ENCODE measurements at regions of chr4 and their contacts with region 1.

Region 1: DNA sequence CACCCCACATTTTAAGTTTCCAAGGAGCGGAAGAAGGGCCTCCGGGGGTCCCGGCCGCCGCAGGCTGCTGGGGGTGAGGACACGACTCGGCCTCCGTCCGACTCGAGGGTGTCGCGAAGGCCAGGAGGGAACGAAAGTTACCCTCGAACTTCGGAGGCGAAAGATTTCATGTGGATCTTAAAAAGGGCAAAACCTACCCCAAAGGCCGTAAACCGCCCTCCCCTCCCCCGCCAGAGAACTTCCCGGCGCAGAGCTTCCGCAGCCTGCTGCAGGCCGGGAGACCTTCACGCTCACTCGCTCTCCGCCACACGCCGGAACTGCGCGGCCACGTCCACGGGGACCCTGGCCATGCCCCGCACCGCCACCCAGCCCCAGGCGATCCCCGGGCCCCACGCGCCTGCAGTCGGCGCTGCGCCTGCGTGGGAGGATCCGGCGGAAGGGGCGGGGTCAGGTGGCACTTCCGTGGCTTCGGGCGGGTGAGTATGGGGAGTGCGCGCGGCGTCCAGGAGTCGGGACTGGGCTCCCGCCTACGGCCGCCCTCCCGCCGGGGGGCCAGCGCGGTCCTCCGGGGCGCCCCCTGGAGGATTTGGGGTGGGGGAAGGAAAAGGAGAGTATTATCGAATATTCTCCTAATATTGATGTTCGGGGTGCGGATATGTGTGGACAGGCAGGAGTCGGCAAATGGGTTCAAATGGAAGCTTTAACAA is at the start of gene MMAA:
- DNase-seq: peak; percentile 66 to 94
- H3K4me3 ChIP-seq: peak within 1 kb of the TSS; percentile 94
- H3K27ac ChIP-seq: peak within 1 kb of the TSS; percentile 86
- H3K4me1 ChIP-seq: no peaks in the 10 kb centered on the region; the same call in 1 of the 2 replicates
- H3K27me3 ChIP-seq: no peaks in the 10 kb centered on the region
- CTCF ChIP-seq: peak; percentile 72
- total RNA-seq, gene MMAA: 5.4 and 6.3 TPM in 2 replicates

Region 2: DNA sequence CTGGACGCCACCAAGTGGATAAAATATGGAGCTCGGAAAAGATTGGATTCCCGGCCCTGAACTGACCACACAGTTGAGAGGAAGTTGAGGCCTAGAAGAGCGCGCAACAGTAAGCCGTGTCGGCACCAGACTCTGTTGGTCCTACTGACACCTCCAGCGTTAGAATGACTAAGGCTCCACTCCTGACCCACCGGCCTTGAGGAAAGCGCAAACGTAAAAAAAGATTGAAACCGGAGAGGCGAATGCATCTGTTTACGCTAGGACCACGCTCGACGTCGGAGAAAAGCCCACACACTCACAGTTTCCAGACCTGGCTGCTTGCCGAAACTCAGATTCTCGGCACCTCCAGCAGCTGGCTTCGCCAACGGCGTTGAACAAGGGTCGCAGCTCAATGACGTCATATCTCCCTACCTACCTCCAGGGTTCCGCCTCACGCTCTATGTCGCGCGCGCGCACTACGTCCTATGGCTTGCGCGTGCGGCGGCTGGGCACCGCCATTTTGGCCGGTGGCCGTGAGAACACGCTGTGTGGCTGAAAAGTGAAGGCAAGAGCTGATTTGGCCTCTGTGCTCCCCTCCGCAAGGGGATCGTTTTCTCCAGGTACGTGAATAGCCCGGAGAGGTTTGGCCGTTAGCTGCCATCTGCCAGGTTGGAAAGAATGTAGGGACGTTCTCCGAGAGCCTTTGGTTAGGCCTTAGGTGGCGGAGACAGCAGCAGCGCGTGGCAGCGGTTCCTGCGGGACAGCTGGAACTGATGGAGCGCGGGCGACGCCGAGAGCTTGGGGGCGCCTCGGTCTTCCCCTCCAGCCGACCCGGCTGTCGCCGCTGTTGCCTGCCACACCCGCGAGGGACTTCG is 521.0 kb before region 1 on chr4 and contains the starts of genes ABCE1 and ANAPC10:
- CTCF ChIA-PET with region 1: no interaction called
- POLR2A ChIA-PET with region 1: interaction called, 3 read pairs
- intact Hi-C with region 1: loop called (anchors 5 kb)
- DNase-seq: peak; percentile 86 to 90
- H3K4me3 ChIP-seq: peak within 1 kb of the TSS; percentile 78
- H3K27ac ChIP-seq: peak within 1 kb of the TSS; percentile 82
- H3K4me1 ChIP-seq: peaks cover 20% of the 10 kb centered on the region
- H3K27me3 ChIP-seq: no peaks in the 10 kb centered on the region
- CTCF ChIP-seq: no peak
- total RNA-seq, gene ABCE1: 55.1 and 60.6 TPM in 2 replicates
- total RNA-seq, gene ANAPC10: 16.5 and 20.2 TPM in 2 replicates

Region 3: DNA sequence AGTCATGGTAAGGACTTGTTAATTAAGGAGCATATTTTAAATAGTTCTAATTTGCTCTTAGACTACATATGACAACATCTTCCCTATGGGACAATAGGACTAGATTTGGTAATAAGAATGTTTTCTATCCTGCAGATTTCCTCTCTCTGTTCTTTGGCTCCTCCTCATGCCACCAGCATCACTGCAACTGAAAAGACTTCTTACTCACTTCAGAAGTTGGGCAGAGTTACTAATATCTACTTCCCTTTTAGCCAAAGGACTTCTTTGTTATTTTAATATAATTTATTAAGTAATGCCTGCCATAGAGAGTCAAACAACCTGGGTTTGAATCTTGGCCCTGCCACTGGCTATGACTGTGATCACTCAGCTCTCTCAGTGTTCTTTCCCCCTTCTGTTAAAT is 16.5 kb after region 1 on chr4:
- CTCF ChIA-PET with region 1: interaction called, 10 read pairs
- POLR2A ChIA-PET with region 1: no interaction called
- intact Hi-C with region 1: no loop called
- DNase-seq: no peak
- H3K4me3 ChIP-seq: no peak overlapping the region
- H3K27ac ChIP-seq: no peak overlapping the region
- H3K4me1 ChIP-seq: no peaks in the 10 kb centered on the region
- H3K27me3 ChIP-seq: no peaks in the 10 kb centered on the region
- CTCF ChIP-seq: no peak

Region 4: GRCh38 chr4:145722561-145722960 is 103.5 kb after region 1 on chr4:
- CTCF ChIA-PET with region 1: no interaction called
- POLR2A ChIA-PET with region 1: no interaction called
- intact Hi-C with region 1: no loop called
- DNase-seq: no peak
- H3K4me3 ChIP-seq: no peak overlapping the region
- H3K27ac ChIP-seq: no peak overlapping the region
- H3K4me1 ChIP-seq: peaks cover 12% of the 10 kb centered on the region
- H3K27me3 ChIP-seq: no peaks in the 10 kb centered on the region
- CTCF ChIP-seq: no peak

Region 5: DNA sequence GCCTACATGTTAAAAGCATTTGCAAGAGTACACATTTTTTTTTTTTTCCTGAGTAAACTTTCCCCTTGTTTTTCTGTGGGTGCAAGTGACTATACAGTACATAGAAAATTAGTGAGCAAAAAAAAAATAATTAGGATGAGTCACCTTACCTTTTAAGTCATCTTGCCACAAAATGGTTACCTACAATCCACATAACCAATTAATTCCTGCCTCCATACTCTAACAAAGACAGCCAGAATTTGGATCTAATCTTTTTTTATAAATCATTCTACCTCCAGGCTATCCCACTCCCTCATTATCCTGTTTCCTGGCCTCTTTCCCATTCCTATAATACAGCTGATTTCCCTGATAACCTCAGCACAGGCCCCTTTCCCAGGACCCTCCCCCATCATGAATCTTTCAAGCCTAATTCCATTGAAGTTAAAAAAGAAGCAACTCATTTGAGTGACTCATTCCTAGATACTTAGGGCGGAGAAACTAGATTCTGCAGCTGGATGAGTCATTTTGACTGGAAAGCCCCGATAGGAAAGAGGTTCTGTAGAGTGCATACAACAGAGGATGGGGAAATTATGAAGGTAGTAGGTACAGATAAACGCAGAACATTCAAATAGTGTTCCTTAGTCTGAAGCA is 189.1 kb after region 1 on chr4:
- CTCF ChIA-PET with region 1: no interaction called
- POLR2A ChIA-PET with region 1: no interaction called
- intact Hi-C with region 1: loop called (anchors 1 kb)
- DNase-seq: peak; percentile 77 to 96
- H3K4me3 ChIP-seq: peak overlapping the region; percentile 35; the same call in 1 of the 2 replicates
- H3K27ac ChIP-seq: peak overlapping the region; percentile 99
- H3K4me1 ChIP-seq: peaks cover 26% of the 10 kb centered on the region
- H3K27me3 ChIP-seq: no peaks in the 10 kb centered on the region
- CTCF ChIP-seq: no peak

Region 6: DNA sequence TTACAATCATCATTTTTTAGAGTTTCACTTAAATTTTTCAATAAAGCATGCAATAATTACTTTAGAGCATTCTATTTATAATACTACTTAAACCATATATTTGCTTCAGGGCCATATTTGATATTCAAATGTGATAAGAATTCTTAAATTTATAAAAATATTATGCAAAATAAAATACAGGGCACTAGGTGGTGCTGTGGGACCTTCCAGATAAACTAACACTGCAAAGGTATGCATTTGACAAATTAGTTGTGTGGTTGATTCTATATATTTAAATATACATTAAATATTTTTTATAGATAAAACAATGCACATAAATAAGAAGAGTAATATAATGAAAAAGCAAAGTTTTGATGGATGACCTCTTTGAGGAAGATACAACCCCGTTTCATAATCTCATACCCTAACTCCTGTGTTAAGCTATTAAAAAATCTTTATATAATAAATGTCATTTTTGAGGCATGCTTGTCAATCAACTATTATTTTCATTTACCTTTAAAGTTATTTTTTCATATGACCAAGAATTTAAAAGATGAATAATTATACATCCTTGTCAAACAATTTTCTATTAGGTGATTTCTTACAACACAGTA is 723.6 kb after region 1 on chr4:
- CTCF ChIA-PET with region 1: no interaction called
- POLR2A ChIA-PET with region 1: no interaction called
- intact Hi-C with region 1: loop called (anchors 2 kb)
- DNase-seq: peak; percentile 11 to 43
- H3K4me3 ChIP-seq: no peak overlapping the region
- H3K27ac ChIP-seq: no peak overlapping the region
- H3K4me1 ChIP-seq: peaks cover 19% of the 10 kb centered on the region
- H3K27me3 ChIP-seq: no peaks in the 10 kb centered on the region
- CTCF ChIP-seq: peak; percentile 70